Caco-2 (cell line): ENCODE measurements at regions of chr9 and their contacts with region 1.

Region 1: GRCh38 chr9:95317119-95317892 is at the start of gene FANCC:
- DNase-seq: peak; percentile 95 to 96
- H3K4me3 ChIP-seq: peak within 1 kb of the TSS; percentile 98
- H3K4me3 Mint-ChIP-seq: peak within 1 kb of the TSS; percentile 82
- H3K27ac Mint-ChIP-seq: peak within 1 kb of the TSS; percentile 98
- H3K4me1 ChIP-seq: peaks cover 12% of the 10 kb centered on the region; the same call in 1 of the 2 replicates
- H3K4me1 Mint-ChIP-seq: peaks cover 13% of the 10 kb centered on the region
- H3K27me3 ChIP-seq: no peaks in the 10 kb centered on the region
- H3K27me3 Mint-ChIP-seq: no peaks in the 10 kb centered on the region
- CTCF ChIP-seq: no peak
- total RNA-seq, gene FANCC: 24.3 and 29.2 TPM in 2 replicates

Region 2: GRCh38 chr9:95249986-95250385 is 67.3 kb before region 1 on chr9:
- CTCF ChIA-PET with region 1: no interaction called
- POLR2A ChIA-PET with region 1: no interaction called
- intact Hi-C with region 1: no loop called
- DNase-seq: no peak
- H3K4me3 ChIP-seq: no peak overlapping the region
- H3K4me3 Mint-ChIP-seq: no peak overlapping the region
- H3K27ac Mint-ChIP-seq: no peak overlapping the region
- H3K4me1 ChIP-seq: no peaks in the 10 kb centered on the region
- H3K4me1 Mint-ChIP-seq: no peaks in the 10 kb centered on the region
- H3K27me3 ChIP-seq: no peaks in the 10 kb centered on the region
- H3K27me3 Mint-ChIP-seq: no peaks in the 10 kb centered on the region
- CTCF ChIP-seq: no peak

Region 3: DNA sequence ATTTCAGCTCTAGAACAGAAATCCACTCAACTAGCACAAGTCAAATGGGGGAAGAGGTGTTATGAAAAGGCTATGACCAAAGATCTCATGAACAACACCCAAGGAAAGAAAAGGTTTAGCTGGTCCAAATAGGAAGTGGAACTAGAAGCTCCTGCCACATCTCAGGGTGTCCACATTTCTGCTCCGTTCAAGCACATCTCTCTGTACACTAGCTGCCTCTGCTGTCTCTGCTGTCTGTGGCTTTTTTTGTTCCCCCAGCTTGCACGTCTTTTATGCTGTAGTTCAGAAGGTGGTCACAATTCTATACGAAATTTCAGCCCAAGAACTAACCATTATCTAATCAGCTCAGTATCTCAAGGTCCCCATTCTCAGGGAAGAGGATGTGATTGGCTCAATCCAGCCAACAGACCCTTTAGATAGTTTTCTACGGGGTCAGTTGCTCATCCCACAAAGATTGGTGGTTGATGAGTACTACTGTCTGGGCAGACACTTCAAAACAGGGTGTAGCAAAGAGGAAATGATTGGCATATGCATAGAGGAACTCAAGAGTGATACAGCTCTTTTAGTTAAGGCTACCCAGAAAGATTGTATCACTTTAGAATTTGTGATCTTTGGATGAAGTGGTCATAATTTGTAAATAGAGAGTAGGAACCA is 43.8 kb before region 1 on chr9:
- CTCF ChIA-PET with region 1: no interaction called
- POLR2A ChIA-PET with region 1: no interaction called
- intact Hi-C with region 1: no loop called
- DNase-seq: no peak
- H3K4me3 ChIP-seq: no peak overlapping the region
- H3K4me3 Mint-ChIP-seq: no peak overlapping the region
- H3K27ac Mint-ChIP-seq: no peak overlapping the region
- H3K4me1 ChIP-seq: peaks cover 25% of the 10 kb centered on the region
- H3K4me1 Mint-ChIP-seq: peaks cover 24% of the 10 kb centered on the region
- H3K27me3 ChIP-seq: no peaks in the 10 kb centered on the region
- H3K27me3 Mint-ChIP-seq: no peaks in the 10 kb centered on the region
- CTCF ChIP-seq: no peak

Region 4: DNA sequence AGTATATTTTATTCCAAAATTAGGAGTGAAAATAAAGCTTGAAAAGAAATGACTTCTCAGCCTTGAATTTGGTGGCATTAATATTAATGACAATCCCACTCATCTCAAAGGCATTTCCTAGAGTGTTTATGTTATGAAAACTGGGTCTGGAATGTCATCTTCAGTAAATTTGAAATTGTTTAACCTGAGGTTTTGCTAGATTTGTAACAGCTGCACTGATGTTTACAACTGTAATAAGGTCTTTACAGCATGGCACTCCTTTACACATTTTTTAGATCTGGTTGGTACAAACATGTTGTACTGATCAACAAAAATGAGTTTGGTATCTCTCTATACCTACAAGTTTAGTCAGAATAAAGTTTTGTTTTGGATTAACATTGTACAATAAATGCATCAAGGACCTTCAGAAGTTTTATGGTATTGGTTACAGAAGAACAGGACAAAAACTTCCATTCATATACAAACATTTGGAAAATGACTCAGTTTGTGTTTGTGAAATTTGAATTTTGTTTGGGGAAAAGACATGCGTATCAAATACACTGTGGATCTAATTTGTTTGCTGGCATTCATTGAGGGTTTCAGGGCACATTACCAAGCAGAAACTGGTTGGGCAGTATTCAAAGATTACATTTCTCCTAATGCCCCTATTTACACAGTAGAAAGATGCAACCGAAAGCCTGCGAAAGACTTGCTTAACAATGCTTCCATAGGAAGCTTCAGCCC is 11.4 kb before region 1 on chr9:
- CTCF ChIA-PET with region 1: no interaction called
- POLR2A ChIA-PET with region 1: no interaction called
- intact Hi-C with region 1: no loop called
- DNase-seq: no peak
- H3K4me3 ChIP-seq: no peak overlapping the region
- H3K4me3 Mint-ChIP-seq: no peak overlapping the region
- H3K27ac Mint-ChIP-seq: no peak overlapping the region
- H3K4me1 ChIP-seq: peaks cover 7% of the 10 kb centered on the region
- H3K4me1 Mint-ChIP-seq: no peaks in the 10 kb centered on the region
- H3K27me3 ChIP-seq: no peaks in the 10 kb centered on the region
- H3K27me3 Mint-ChIP-seq: no peaks in the 10 kb centered on the region
- CTCF ChIP-seq: no peak

Region 5: GRCh38 chr9:95383185-95383673 is 65.9 kb after region 1 on chr9:
- CTCF ChIA-PET with region 1: no interaction called
- POLR2A ChIA-PET with region 1: no interaction called
- intact Hi-C with region 1: loop called (anchors 2 kb)
- DNase-seq: peak in 1 of 2 experiments; percentile 50
- H3K4me3 ChIP-seq: no peak overlapping the region
- H3K4me3 Mint-ChIP-seq: no peak overlapping the region
- H3K27ac Mint-ChIP-seq: peak overlapping the region; percentile 56
- H3K4me1 ChIP-seq: peaks cover 30% of the 10 kb centered on the region
- H3K4me1 Mint-ChIP-seq: peaks cover 32% of the 10 kb centered on the region
- H3K27me3 ChIP-seq: no peaks in the 10 kb centered on the region
- H3K27me3 Mint-ChIP-seq: no peaks in the 10 kb centered on the region
- CTCF ChIP-seq: no peak

Region 6: GRCh38 chr9:95425910-95426551 is 108.7 kb after region 1 on chr9:
- CTCF ChIA-PET with region 1: no interaction called
- POLR2A ChIA-PET with region 1: no interaction called
- intact Hi-C with region 1: loop called (anchors 2 kb)
- DNase-seq: peak; percentile 64 to 73
- H3K4me3 ChIP-seq: peak overlapping the region; percentile 48
- H3K4me3 Mint-ChIP-seq: peak overlapping the region; percentile 92
- H3K27ac Mint-ChIP-seq: peak overlapping the region; percentile 85
- H3K4me1 ChIP-seq: no peaks in the 10 kb centered on the region
- H3K4me1 Mint-ChIP-seq: peaks cover 7% of the 10 kb centered on the region
- H3K27me3 ChIP-seq: no peaks in the 10 kb centered on the region
- H3K27me3 Mint-ChIP-seq: no peaks in the 10 kb centered on the region
- CTCF ChIP-seq: no peak

Region 7: DNA sequence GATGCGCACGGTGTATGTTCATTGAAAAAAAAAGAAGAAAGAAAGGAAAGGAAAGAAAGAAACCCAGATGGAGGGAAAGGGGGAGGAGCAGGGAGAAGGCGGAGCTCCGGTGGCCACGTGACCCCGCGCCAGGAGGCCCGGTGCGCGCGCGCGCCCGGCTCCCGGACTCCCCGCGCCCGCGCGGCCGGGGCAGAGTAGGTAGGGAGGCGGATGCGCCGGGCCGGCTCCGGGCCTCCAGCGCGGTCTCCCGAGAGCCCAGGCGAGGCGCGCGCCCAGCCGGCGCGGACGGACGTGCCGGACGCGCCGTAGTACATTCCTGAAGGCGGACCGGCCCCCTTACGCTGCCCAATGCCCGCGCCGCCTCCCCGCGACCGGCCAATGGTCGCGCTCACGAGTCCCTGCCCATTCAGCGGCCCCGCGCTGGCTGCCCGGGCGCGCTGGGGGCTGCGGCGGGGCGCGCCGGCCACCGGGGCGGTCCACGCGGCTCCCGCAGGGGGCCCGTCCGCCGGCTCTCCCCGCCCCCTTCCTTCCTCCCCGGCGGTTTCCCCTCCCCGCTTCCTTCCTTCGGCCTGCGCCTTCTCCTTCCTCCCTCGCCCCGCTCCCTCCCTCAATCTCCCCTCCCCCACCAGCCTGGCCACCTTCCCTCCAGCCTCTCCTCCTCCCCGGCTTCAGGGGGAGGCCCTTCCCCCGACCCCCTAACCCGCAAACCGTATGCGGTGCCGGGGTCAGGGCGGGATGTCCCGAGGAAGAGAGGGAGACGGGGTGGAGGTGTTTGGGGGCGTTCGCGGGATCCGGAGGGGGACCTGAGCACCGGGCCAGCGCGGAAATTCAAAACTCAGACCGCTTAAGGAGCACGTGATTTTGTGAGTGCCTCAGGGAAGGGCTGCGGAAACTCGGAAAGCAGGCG is 193.7 kb after region 1 on chr9:
- CTCF ChIA-PET with region 1: interaction called, 3 read pairs
- POLR2A ChIA-PET with region 1: no interaction called
- intact Hi-C with region 1: loop called (anchors 1 kb)
- DNase-seq: peak; percentile 96 to 97
- H3K4me3 ChIP-seq: peak overlapping the region; percentile 94
- H3K4me3 Mint-ChIP-seq: peak overlapping the region; percentile 93
- H3K27ac Mint-ChIP-seq: peak overlapping the region; percentile 87
- H3K4me1 ChIP-seq: peaks cover 11% of the 10 kb centered on the region; the same call in 1 of the 2 replicates
- H3K4me1 Mint-ChIP-seq: no peaks in the 10 kb centered on the region
- H3K27me3 ChIP-seq: no peaks in the 10 kb centered on the region
- H3K27me3 Mint-ChIP-seq: no peaks in the 10 kb centered on the region
- CTCF ChIP-seq: no peak

Region 8: GRCh38 chr9:95875305-95876137 is 558.2 kb after region 1 on chr9 and contains the start of gene ERCC6L2:
- CTCF ChIA-PET with region 1: no interaction called
- POLR2A ChIA-PET with region 1: no interaction called
- intact Hi-C with region 1: loop called (anchors 10 kb)
- DNase-seq: peak; percentile 96 to 98
- H3K4me3 ChIP-seq: no peak within 1 kb of the TSS
- H3K4me3 Mint-ChIP-seq: no peak within 1 kb of the TSS
- H3K27ac Mint-ChIP-seq: no peak within 1 kb of the TSS
- H3K4me1 ChIP-seq: no peaks in the 10 kb centered on the region
- H3K4me1 Mint-ChIP-seq: no peaks in the 10 kb centered on the region
- H3K27me3 ChIP-seq: no peaks in the 10 kb centered on the region
- H3K27me3 Mint-ChIP-seq: no peaks in the 10 kb centered on the region
- CTCF ChIP-seq: no peak
- total RNA-seq, gene ERCC6L2: 45.4 and 46.1 TPM in 2 replicates